Posterior vena cava (tissue), 2 donors: ENCODE measurements at regions of chr11 and their contacts with region 1.

Region 1: GRCh38 chr11:119447664-119448242 is 24.8 kb upstream of the THY1 start:
- DNase-seq: no peak

Region 2: DNA sequence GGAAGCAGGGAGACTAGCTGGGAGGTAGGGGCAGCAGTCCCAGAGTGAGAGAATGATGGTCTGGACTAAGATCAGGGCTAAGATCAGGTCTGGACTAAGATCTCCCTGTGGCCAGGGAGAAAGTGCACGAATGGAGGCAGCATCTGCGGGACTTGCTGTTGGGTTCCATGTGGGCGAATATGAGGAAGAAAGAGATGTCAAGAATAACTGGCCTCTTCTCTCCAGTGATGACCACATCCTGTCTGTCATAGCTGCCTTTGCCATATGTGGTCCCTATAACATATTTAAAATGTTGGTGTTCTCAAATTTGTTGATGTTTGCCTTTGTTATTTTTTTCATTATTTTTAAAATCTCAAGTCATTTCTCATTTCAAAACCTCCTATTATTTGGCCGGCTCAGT is 591.4 kb before region 1 on chr11:
- intact Hi-C with region 1: no loop called
- DNase-seq: peak; percentile 11

Region 3: GRCh38 chr11:119406005-119406404 is 41.7 kb before region 1 on chr11:
- intact Hi-C with region 1: loop called in 1 of 2 experiments (anchors 2 kb)
- DNase-seq: no peak